Activated CD4-positive, alpha-beta T cell treated with anti-CD3 and anti-CD28 coated beads for 36 hours (primary cell): ENCODE measurements at regions of chr17 and their contacts with region 1.

Region 1: DNA sequence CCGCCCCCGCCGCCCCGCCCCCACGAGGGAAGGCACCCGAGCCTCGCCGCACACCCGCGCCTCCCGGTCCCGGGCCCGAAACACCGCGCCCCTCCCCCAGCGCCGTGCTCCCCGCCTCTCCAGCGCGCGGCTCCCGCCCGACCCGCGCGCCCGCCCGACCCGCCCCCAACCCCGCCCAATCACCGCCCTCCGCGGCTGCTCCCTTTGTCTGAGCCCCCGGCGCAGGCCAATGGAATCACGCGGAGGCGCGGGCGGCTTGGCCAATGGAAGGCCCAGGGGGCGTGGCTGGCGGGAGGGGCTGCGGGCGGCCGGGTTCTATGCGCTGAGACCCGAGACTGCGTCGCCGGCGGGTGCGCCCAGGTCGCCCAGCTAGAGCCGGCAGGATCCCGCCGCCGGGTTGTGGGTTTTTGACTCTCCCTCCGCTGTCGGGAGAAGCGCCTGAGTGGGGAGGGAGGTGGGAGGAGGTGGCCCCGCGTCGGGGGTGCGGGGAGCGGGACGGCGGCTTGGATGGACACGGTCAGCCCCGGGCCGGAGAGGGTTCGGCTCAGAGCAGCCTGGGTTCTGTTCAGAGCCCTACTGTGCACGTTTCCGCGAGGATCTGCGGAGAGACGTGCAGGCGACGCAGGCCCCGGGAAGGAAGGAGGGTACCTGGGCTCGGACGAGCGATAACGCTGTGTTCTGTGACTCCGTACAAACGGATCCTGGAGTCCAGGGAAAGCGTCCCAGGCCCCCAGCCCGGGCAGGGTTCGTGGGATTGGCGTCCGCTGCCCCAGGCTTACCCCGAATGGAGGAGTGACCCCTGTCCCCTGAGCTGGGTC is 49.0 kb upstream of the BAHCC1 start:
- DNase-seq: peak; percentile 98
- ATAC-seq: peak; percentile 93
- H3K4me3 Mint-ChIP-seq: peak overlapping the region; percentile 26
- H3K27ac Mint-ChIP-seq: no peak overlapping the region
- H3K4me1 Mint-ChIP-seq: peaks cover 19% of the 10 kb centered on the region
- H3K27me3 Mint-ChIP-seq: peaks cover 25% of the 10 kb centered on the region

Region 2: DNA sequence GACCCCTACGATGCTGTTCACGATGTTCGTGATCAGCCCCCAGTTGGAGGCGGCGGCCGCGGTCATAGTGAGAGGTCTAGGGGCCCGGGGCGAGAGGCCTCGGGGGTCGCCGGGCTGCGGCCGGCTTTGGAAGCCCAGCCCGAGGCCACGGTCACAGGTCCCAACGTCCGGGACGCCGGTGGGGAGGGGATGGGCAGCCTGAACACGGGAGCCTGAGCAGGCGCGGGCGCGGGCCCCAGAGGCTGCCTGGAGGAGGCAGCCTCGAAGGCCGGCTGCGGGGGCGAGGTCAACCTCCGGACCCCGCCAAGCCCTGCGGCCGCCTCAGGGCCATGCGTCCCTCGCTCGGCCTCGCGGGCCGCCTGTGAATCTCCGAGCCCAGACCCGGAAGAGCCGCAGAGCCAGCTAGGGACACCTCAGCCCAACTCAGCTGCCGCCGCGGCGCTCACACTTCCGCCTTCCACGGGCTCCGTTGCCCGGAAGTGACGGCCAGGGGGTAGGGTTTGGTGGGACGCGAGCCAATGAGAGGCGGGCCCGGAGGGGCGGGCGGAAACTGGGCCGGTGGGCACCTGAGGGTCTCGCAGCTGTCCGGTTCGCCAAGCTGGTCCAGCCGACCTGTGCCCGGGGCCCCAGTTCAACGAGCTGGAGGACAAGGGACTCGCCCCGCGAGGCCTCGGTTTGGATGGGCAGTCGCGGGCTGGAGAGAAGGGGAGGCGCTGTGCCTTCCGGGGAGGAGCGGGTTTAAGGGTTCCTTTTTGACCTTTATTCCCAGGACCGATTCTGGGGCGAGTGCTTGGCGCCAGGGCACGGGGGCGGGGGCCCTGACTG is 51.2 kb before region 1 on chr17 and contains the start of gene SLC38A10:
- CTCF ChIA-PET with region 1: no interaction called
- POLR2A ChIA-PET with region 1: no interaction called
- intact Hi-C with region 1: loop called in 1 of 2 experiments (anchors 1 kb)
- DNase-seq: peak; percentile 95
- ATAC-seq: peak; percentile 91
- H3K4me3 Mint-ChIP-seq: peak within 1 kb of the TSS; percentile 89
- H3K27ac Mint-ChIP-seq: peak within 1 kb of the TSS; percentile 96
- H3K4me1 Mint-ChIP-seq: peaks cover 36% of the 10 kb centered on the region
- H3K27me3 Mint-ChIP-seq: no peaks in the 10 kb centered on the region
- total RNA-seq, gene SLC38A10: 47.6 to 52.9 TPM

Region 3: DNA sequence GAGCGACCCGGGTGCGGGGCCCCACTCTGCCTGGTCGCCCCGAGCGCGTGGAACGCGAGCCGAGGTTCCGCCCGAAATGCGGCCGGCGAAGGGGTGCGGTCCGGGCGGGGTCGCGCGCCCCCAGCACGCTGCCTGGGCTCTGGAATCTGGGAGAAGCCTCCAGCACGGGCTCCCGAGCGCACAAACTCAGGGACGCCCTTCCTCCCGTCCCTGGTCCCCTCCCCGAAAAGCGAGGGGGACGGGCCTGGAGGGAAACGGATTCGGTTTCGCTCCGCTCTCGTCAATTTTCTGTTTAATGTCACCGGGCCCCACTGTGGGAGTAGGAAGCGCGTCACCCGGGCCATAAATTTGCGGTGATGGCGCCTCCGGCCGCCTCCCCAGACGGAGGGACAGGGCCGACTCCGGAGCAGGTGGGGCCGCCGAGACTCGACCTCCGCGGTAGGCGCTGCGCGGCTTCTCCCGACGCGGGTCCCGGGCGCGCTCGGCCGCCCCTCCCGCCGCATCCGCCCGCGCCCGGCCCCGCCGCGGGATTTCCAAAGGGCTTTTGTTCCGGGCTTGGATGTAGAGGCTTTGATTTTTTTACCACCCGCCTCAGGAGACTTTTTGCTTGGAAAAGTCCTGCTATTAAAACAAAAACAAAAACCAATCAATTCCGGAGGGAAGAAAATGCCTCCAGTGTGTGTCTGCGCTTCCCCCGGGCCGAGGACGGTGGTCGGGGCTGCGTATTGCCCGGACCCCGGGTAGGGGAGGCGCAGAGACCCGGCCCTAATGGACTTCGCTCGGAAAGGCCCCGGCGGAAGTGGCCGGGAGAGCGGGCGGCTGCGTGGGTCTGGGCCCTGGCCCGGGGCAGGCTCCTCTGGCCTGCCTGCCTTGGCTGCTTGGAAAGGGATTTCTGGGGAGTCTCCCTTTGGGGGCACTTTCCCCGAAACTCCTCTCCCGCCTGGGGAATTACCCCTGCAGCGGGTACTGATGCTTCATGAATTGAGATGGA is 41.1 kb after region 1 on chr17:
- CTCF ChIA-PET with region 1: no interaction called
- POLR2A ChIA-PET with region 1: no interaction called
- intact Hi-C with region 1: loop called in 1 of 2 experiments (anchors 1 kb)
- DNase-seq: peak; percentile 77
- ATAC-seq: peak; percentile 80
- H3K4me3 Mint-ChIP-seq: peak overlapping the region; percentile 63
- H3K27ac Mint-ChIP-seq: no peak overlapping the region
- H3K4me1 Mint-ChIP-seq: no peaks in the 10 kb centered on the region
- H3K27me3 Mint-ChIP-seq: peaks cover 45% of the 10 kb centered on the region

Region 4: GRCh38 chr17:81419328-81419885 is 73.1 kb after region 1 on chr17:
- CTCF ChIA-PET with region 1: no interaction called
- POLR2A ChIA-PET with region 1: no interaction called
- intact Hi-C with region 1: no loop called
- DNase-seq: no peak
- ATAC-seq: no peak
- H3K4me3 Mint-ChIP-seq: no peak overlapping the region
- H3K27ac Mint-ChIP-seq: no peak overlapping the region
- H3K4me1 Mint-ChIP-seq: no peaks in the 10 kb centered on the region
- H3K27me3 Mint-ChIP-seq: no peaks in the 10 kb centered on the region

Region 5: DNA sequence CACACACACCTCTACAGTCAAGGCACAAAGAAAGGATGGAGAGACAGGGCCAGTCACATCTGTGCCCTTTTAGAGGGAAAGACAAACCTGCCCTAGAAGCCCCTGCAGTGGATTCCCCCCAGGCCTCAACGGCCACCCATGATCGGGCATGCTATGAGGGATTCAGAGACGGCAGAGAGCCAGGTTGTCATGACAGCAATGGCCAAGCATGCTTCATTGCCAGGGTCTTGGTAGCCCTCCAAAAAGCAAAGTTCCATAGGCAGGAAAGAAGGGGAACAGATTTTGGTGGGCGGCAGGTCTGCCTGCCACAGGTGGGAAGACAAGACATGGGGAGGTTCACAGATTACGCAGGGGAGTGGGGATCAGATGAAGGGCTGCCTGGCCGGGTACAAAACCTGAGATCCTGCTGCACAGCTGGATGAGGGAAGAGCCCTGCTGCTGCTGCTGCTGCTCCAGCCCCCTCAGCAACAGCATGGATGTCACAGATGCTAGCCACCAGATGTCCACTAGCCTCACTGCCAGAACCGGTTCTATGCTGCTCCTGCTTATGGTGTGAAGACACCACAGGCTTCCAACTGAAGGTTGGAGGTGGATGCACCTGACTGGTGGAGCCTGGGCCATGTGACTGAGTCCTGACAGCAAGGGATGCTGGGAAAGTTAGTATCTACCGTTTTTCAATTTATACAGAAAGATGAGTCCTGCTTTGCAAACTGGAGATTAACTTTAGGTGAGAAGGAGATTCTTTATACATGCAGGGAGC is 148.5 kb after region 1 on chr17:
- CTCF ChIA-PET with region 1: no interaction called
- POLR2A ChIA-PET with region 1: no interaction called
- intact Hi-C with region 1: no loop called
- DNase-seq: peak; percentile 51
- ATAC-seq: peak; percentile 84
- H3K4me3 Mint-ChIP-seq: no peak overlapping the region
- H3K27ac Mint-ChIP-seq: no peak overlapping the region
- H3K4me1 Mint-ChIP-seq: no peaks in the 10 kb centered on the region
- H3K27me3 Mint-ChIP-seq: peaks cover 8% of the 10 kb centered on the region

Region 6: DNA sequence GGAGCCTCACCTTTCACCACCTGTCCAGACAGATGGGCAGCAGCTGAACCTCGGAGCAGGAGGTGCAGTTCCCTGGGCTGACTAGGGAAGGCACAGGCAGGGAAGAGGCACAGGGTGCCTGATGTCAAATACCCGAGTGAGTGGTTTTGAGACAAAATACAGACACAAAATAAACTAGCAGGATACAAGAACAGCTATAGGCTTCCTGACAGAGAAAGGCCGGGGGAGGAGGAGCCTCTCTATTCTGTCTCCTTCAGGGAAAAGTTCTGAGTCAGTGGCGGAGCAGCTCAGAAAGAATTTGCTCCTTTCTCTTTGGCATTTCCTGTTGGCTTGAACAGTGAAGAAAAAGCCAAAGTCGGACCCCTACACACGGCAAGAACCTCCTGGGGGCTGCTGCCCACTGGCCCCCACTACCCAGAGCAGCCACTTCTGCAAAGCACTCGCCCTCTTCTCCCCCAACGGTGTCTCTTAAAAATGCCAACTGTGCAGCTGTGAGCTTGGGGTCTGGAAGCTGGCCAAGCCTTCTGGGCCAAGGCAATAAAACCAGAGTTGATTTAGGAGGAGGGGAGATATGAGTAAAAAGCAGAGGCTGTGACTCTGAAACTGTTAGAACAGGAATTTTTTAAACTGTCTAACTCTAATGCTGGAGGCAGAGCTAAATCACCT is 220.3 kb after region 1 on chr17:
- CTCF ChIA-PET with region 1: no interaction called
- POLR2A ChIA-PET with region 1: no interaction called
- intact Hi-C with region 1: no loop called
- DNase-seq: no peak
- ATAC-seq: no peak
- H3K4me3 Mint-ChIP-seq: no peak overlapping the region
- H3K27ac Mint-ChIP-seq: no peak overlapping the region
- H3K4me1 Mint-ChIP-seq: no peaks in the 10 kb centered on the region
- H3K27me3 Mint-ChIP-seq: no peaks in the 10 kb centered on the region